Heart left ventricle (tissue), 16 donors: ENCODE measurements at regions of chr12 and their contacts with region 1.

Region 1: GRCh38 chr12:55738123-55739024 is 4.5 kb upstream of the GDF11 start:
- DNase-seq: peak; percentile 77 to 88 (median 82)
- ATAC-seq: peak; percentile 70 to 74 (median 72)
- H3K4me3 ChIP-seq: peak overlapping the region in 11 of 12 donors; percentile 37 to 68 (median 57)
- H3K27ac ChIP-seq: peak overlapping the region in 11 of 12 donors; percentile 38 to 79 (median 63)
- H3K4me1 ChIP-seq: peaks cover 0 to 27% (median 16%) of the 10 kb centered on the region in 12 donors
- H3K27me3 ChIP-seq: no peaks in the 10 kb centered on the region
- CTCF ChIP-seq: peak; percentile 78 to 91 (median 86)
- POLR2A ChIP-seq: no peak

Region 2: GRCh38 chr12:55659486-55660385 is 78.6 kb before region 1 on chr12:
- intact Hi-C with region 1: loop called in 5 of 10 experiments (anchors 2 to 5 kb)
- DNase-seq: peak in 4 of 5 donors; percentile 46 to 85 (median 63)
- ATAC-seq: peak; percentile 91 to 93 (median 92)
- H3K4me3 ChIP-seq: peak overlapping the region in 5 of 12 donors; percentile 0 to 21 (median 10)
- H3K27ac ChIP-seq: peak overlapping the region; percentile 79 to 94 (median 91)
- H3K4me1 ChIP-seq: peaks cover 0 to 35% (median 12%) of the 10 kb centered on the region in 12 donors
- H3K27me3 ChIP-seq: no peaks in the 10 kb centered on the region
- CTCF ChIP-seq: peak; percentile 21 to 59 (median 49)
- POLR2A ChIP-seq: peak; percentile 59 to 61

Region 3: GRCh38 chr12:55715833-55716581 is 22.4 kb before region 1 on chr12 and contains the start of gene BLOC1S1:
- intact Hi-C with region 1: no loop called
- DNase-seq: peak; percentile 91 to 96 (median 93)
- ATAC-seq: peak; percentile 56 to 75 (median 64)
- H3K4me3 ChIP-seq: peak within 1 kb of the TSS; percentile 56 to 93 (median 72)
- H3K27ac ChIP-seq: peak within 1 kb of the TSS; percentile 89 to 99 (median 94)
- H3K4me1 ChIP-seq: peaks cover 3 to 83% (median 64%) of the 10 kb centered on the region in 12 donors
- H3K27me3 ChIP-seq: no peaks in the 10 kb centered on the region
- CTCF ChIP-seq: peak in 3 of 12 donors; percentile 12 to 15 (median 14)
- POLR2A ChIP-seq: peak in 1 of 2 donors; percentile 55
- total RNA-seq, gene BLOC1S1: 71.3 to 173 (median 131) TPM

Region 4: GRCh38 chr12:55812088-55812487 is 73.7 kb after region 1 on chr12:
- intact Hi-C with region 1: loop called in 3 of 10 experiments (anchors 5 kb)
- DNase-seq: no peak
- ATAC-seq: no peak
- H3K4me3 ChIP-seq: no peak overlapping the region
- H3K27ac ChIP-seq: no peak overlapping the region
- H3K4me1 ChIP-seq: peaks cover 0 to 44% (median 35%) of the 10 kb centered on the region in 12 donors
- H3K27me3 ChIP-seq: no peaks in the 10 kb centered on the region
- CTCF ChIP-seq: no peak
- POLR2A ChIP-seq: no peak

Region 5: DNA sequence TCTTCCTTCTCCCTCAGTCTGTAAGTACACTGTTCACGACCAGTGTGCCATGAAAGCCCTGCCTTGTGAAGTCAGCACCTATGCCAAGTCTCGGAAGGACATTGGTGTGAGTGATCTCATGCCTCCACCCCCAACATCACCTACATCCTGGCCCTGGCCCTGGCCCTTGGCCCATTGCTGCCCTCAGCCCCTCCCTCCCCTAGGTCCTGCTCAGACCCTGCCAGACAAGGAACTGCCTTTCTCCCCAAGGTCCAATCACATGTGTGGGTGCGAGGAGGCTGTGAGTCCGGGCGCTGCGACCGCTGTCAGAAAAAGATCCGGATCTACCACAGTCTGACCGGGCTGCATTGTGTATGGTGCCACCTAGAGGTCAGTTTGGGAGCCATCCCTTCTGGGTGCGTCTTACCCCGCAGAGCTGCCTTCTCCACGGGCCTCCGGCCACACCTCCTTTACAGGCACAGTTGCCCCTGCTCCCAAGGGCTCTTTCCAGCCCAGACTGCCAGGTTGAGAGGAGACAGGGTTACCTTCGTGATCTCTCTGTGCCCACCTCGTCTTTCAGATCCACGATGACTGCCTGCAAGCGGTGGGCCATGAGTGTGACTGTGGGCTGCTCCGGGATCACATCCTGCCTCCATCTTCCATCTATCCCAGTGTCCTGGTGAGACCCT is 201.8 kb after region 1 on chr12:
- intact Hi-C with region 1: loop called (anchors 1 to 5 kb)
- DNase-seq: peak; percentile 83 to 87 (median 87)
- ATAC-seq: peak; percentile 85 to 96 (median 95)
- H3K4me3 ChIP-seq: peak overlapping the region in 8 of 12 donors; percentile 15 to 42 (median 24)
- H3K27ac ChIP-seq: peak overlapping the region in 2 of 12 donors; percentile 7 to 58
- H3K4me1 ChIP-seq: peaks cover 0 to 13% (median 7%) of the 10 kb centered on the region in 12 donors
- H3K27me3 ChIP-seq: no peaks in the 10 kb centered on the region
- CTCF ChIP-seq: peak; percentile 87 to 94 (median 91)
- POLR2A ChIP-seq: no peak

Region 6: GRCh38 chr12:56041552-56042429 is 303.4 kb after region 1 on chr12 and contains the start of gene RPS26:
- intact Hi-C with region 1: loop called in 4 of 10 experiments (anchors 5 to 10 kb)
- DNase-seq: peak; percentile 95 to 99 (median 97)
- ATAC-seq: peak; percentile 96 to 98 (median 97)
- H3K4me3 ChIP-seq: peak within 1 kb of the TSS; percentile 66 to 97 (median 83)
- H3K27ac ChIP-seq: peak within 1 kb of the TSS; percentile 89 to 99 (median 96)
- H3K4me1 ChIP-seq: peaks cover 3 to 23% (median 17%) of the 10 kb centered on the region in 12 donors
- H3K27me3 ChIP-seq: no peaks in the 10 kb centered on the region
- CTCF ChIP-seq: peak; percentile 22 to 65 (median 50)
- POLR2A ChIP-seq: peak in 1 of 2 donors; percentile 52
- total RNA-seq, gene RPS26: 11.7 to 616 (median 23.2) TPM

Region 7: GRCh38 chr12:56110571-56110970 is 372.2 kb after region 1 on chr12:
- intact Hi-C with region 1: loop called in 2 of 10 experiments (anchors 5 to 10 kb)
- DNase-seq: no peak
- ATAC-seq: no peak
- H3K4me3 ChIP-seq: no peak overlapping the region
- H3K27ac ChIP-seq: no peak overlapping the region
- H3K4me1 ChIP-seq: peaks cover 0 to 22% (median 11%) of the 10 kb centered on the region in 12 donors
- H3K27me3 ChIP-seq: no peaks in the 10 kb centered on the region
- CTCF ChIP-seq: no peak
- POLR2A ChIP-seq: no peak